GM10248 (cell line): ENCODE measurements at regions of chr3 and their contacts with region 1.

Region 1: GRCh38 chr3:114418724-114419543 is 125.1 kb downstream of the TIGIT start:
- DNase-seq: peak; percentile 29
- CTCF ChIP-seq: peak; percentile 71

Region 2: DNA sequence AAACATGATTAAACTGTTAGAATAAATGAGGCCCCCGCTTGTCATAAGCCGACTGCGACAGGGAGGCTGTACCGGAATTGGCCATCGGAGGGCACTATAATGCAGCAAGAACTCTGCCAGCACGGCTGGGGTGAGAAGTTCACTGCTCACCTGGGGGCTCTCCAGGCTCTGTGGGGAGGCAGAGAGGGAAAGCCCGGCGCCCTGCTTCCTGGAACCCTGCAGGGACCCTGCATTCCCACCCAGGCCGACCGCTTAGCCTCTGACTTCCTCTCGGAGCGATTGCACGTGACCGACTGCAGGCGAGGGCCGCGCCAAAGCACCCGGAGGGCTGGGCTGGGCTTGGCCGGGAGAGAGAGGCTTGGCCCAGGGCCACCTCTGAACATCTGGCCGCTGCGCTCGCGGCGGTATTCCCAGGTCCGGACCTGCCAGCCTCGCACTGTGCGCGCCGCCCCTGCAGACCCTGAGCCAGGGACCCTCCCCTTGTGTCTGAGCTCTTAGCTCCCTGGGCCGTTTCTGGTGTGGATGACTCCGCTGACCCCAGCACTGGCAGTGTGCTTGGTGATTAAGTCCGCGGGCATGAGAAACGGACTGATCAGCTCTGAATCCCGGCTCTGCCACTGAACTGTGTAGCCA is 266.3 kb before region 1 on chr3:
- CTCF ChIA-PET with region 1: interaction called, 26 read pairs
- POLR2A ChIA-PET with region 1: no interaction called
- DNase-seq: peak; percentile 85
- CTCF ChIP-seq: peak; percentile 92

Region 3: GRCh38 chr3:114299421-114299820 is 119.5 kb before region 1 on chr3:
- CTCF ChIA-PET with region 1: interaction called, 12 read pairs
- POLR2A ChIA-PET with region 1: no interaction called
- DNase-seq: no peak
- CTCF ChIP-seq: peak; percentile 27

Region 4: GRCh38 chr3:114383875-114384557 is 34.9 kb before region 1 on chr3:
- CTCF ChIA-PET with region 1: interaction called, 139 read pairs
- POLR2A ChIA-PET with region 1: no interaction called
- DNase-seq: peak; percentile 66
- CTCF ChIP-seq: peak; percentile 90

Region 5: DNA sequence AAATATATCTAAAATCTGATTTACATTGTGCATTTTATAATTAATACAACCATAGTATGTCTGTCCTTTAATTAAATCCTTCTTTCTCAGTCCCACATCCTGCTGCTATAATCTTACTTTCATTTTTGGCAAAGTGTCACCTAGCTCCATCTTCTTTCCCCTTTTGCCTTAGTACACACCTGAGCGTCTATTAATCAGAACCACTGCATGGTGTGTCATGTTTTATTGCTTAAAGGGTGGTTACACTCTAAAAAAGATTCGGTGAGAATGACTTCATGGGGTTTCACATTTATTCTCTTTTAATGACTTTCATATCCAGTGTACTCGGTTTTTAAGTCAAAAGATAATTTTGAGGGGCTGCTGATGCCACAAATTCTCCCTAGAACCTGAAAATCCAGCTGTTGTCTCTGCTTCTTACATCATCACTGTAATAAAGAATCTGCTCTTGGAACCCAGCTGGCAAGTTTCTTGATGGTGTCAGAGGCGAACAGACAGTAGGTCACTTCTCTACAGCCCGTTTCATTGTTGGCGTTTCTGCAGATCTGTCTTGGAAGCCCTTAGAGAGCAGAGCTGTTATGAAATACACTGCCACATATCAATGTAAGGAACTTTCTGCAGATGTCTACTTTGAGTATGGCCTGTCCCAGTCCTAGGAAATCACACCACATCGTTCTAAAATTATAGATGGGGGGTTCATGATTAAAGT is 25.4 kb before region 1 on chr3:
- CTCF ChIA-PET with region 1: interaction called, 48 read pairs
- POLR2A ChIA-PET with region 1: no interaction called
- DNase-seq: no peak
- CTCF ChIP-seq: no peak

Region 6: DNA sequence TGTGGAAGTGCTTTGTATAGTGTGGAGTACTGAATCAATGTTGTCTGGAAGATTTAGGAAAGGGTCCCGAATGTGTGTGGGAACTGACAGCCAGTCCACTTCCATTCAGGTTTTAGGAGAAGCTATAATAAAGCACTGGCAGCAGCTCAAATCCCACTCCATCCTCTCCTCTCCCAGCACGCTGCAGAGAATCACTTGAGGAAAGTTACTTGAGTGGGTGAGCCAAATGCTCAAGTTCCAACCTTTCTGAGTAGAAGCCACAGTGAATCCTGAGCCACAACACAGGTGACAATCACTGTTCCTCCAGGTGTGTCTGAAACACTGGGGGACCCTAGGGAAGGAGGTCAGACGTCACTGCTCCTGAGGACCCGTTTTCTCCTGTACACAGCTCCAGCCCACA is 18.6 kb before region 1 on chr3:
- CTCF ChIA-PET with region 1: interaction called, 48 read pairs
- POLR2A ChIA-PET with region 1: no interaction called
- DNase-seq: no peak
- CTCF ChIP-seq: no peak

Region 7: DNA sequence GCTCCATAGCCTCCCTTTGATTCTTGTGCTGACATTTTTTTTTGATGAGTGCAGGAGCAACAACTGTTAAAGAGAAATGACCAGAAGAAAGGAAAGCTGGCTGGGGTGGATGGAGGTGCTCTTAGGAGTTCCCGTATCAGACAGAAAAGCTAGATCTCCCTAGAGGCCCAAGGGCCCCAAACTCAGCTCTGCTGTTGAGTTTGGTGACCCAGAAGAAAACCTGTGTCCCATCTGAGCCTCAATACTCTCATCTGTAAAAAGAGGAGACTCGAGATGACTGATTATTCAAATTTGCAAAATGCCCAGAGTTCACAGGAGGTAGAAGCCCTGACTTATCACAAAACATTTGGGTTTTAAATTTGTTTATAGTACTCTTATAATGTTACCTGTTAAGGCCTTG is 17.2 kb after region 1 on chr3:
- CTCF ChIA-PET with region 1: interaction called, 47 read pairs
- POLR2A ChIA-PET with region 1: no interaction called
- DNase-seq: no peak
- CTCF ChIP-seq: no peak

Region 8: DNA sequence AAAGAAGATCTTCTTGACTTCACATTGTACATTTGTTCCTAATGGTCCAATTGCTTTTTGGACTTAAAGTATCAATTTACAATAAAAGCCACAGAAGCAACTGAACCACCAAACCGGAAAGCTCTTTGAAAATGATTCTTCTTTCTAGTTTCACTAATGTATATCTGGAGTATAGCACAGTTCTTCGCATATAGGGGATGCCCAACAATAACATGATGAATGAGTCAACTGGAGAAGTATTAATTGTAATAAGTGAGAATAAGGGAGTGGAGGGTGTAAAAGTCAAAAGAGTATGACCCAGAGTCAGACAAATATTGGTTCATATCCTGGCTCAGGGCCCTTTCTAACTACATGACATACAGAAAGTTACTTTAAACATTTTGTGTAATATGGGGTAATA is 302.9 kb after region 1 on chr3:
- CTCF ChIA-PET with region 1: no interaction called
- POLR2A ChIA-PET with region 1: no interaction called
- DNase-seq: no peak
- CTCF ChIP-seq: no peak